Posterior vena cava (tissue), 2 donors: ENCODE measurements at regions of chr2 and their contacts with region 1.

Region 1: GRCh38 chr2:16055848-16056580 is 115.7 kb downstream of the MYCN start:
- DNase-seq: no peak

Region 2: DNA sequence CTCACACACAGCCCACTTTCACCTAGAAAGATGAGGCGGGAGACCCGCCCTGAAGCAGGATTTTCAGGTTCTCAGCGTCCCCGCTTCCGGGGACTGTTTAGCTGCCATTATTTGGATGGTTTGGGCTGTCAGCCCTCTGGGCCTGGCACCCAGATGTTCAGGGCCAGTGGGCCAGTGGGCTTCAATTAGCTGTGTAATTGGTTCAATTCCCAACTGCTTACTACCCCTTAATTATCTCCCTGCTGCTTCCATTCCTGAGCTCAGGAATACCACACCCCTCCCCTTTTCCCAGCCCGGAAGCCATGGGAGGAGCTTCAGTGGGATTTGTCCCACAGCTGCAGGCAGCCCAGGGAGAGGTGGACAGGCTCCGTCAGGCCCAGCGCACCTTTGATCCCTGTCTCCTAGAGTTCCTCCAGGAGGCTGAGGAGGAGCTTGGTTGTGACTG is 229.7 kb before region 1 on chr2:
- intact Hi-C with region 1: no loop called
- DNase-seq: no peak

Region 3: GRCh38 chr2:15874316-15874715 is 181.7 kb before region 1 on chr2:
- intact Hi-C with region 1: loop called in 1 of 2 experiments (anchors 10 kb)
- DNase-seq: no peak